Cardiac septum (tissue), 1 donor: ENCODE measurements at regions of chr12 and their contacts with region 1.

Region 1: DNA sequence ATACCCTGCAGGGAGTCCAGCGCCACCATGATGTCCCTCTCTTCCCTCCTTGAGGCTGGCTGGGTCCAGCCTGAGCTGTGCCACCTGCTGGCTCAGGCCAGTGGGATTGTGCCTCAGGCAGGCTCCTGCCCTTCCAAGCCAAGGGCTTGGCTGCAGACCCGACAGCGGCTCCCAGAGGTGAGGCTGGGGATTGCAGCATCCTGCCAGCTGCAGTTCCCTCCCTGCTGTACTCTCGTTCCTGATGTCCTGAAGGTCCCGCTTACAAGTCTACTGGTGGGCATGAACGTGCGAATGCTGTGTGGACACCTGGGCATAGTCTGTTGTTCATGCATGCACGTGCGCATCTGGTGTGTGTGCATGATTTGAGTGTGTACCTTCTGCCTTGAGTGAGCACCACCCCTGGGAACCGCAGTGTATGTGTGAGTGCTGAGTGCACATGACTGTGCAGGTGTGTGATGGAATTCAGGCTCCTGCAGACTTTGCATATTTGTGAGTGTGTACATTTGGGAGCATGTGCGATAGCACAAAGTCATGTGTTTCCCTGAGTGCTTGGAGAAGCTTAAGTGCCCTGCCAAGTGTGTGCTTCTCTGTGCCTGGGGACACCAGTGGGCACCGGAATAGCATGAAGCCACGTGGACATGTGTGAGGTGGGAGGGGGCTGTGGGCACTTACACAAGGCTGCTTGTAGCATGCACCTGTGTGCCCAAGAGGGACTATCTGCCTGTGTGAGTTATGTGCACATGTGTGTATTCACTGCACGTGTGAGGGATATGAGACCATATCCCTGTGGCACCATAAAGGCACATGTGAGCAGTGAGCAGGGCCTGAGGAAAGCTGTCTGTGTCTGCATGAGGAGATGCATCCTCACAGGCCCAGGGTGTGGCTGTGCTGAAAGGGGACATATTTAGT is 19.3 kb upstream of the KRT7 start:
- DNase-seq: peak; percentile 91

Region 2: DNA sequence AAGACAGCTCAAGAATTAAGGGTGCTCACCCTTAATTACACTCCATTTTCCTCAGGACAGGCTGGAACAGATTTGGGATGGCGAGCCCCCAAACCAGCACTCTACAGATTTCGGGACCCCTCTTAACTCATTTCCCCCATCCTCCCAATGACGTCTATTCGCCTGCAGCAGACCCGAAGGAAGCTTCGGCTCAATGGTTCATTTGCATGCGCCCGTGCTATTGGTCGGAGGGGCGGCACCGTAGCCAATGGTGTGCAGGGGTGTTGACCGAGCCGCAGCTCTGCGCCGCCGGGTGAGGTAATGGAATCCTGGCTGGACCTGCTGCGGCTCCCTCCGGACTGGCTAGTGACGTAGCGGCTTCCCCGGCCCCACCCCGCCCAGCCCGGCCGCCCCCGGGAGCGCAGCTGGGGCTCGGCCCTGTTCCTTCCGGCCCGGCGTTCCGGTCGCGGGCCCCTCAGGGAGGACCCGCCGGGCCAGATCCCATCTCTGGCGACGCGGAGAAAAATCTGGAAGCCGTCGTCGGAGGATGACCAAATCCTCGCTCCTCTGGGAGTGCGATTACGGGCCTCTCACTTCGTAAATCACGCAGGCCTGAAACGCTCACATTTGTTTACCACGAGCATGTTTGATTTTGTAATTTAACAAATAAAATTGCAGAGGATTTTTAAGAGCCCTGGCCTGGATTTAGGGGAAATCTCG is 180.8 kb before region 1 on chr12:
- intact Hi-C with region 1: no loop called
- DNase-seq: peak; percentile 100

Region 3: DNA sequence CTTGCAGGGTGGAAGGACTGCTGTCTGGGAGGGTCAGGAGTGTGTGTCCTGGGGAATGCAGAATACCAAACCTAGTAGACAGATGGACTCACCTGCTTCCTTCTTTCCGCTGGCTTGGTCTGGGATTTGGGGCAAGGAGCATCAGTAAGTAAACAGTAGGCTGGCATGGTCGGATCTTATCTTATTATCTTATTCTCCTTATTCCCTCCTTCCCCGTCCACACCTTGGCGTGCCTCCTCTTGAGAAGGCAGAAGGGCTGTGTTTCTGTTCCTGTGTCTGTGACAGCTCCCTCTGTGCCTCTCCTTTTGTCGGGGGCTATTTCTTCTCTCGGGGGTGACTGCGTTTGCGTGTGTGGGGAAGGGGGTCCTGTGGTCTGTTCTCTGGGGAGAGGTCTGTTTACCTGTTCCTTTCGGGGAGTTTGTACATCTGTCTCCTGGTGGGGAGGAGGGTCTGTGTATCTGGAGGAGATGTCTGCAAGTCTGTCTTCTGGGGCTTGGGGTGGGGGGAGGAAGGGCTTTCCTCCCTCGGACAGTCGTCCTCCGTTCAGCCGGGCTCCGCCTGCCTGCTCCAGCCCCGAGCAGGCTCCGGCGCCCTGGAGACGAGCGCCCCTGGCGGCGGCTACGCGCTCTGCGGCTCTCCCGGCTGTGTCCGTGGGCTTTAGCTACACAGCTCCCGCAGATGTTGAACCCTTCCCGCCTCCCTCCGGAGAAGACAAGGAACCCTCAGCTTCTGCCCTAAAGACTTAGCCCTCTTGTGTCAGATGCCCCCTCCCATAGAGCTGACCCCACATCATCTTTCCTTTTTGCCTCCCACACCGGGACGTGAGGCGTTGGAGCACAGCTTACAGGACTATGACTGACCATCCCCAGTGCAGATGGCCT is 65.0 kb after region 1 on chr12:
- intact Hi-C with region 1: loop called (anchors 5 kb)
- DNase-seq: peak; percentile 87

Region 4: GRCh38 chr12:52319097-52319496 is 105.3 kb after region 1 on chr12:
- intact Hi-C with region 1: no loop called
- DNase-seq: peak; percentile 74

Region 5: DNA sequence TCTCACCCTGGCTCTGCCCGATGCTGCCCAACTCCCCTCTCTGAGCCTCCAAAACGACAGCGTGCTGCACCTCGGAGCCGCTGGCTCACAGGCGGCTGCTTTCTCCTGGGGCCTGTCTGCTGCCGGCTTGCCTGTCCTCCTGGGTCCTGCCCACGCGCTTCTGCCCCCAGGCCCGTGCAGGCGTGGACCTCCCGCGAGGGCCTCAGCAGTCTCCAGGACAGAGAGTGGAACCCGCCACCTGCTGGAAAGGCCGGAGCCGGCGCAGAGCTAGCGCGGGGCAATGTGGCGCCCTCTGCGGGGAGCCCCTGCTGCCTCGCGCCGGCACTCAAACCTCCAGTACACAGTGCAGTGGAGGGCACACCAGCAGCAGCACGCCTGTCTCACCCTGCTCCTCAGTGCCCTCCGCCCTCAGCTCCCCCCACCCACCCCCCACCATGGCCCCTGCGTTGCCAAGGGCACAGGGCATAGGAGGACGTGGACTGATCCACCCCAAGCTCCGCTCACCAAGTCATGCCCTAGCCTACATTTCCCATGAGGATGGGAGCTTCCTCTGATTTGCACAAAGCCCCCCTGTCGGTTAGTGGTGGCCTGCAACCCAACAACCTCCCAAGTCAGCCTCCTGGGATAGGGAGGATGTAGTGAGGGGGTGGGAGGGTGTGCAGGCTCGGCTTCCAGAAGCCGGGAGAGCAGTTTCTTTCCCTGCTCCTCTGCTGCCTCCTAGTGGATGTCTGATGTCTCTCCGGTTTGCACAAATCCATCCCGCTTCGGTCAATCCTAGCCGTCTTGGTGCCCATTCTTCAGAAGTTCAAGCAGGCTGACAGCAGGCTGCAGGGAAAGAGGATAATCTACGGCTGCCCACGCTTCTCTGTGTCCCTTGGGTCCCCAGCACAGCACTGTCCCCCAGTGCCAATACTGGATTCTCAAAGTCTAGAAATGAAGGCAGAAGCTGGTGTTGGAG is 665.9 kb after region 1 on chr12:
- intact Hi-C with region 1: loop called (anchors 10 kb)
- DNase-seq: peak; percentile 86